ENCODE measurements at regions of chr2 and their contacts with region 1.

Region 1: GRCh38 chr2:159124441-159124911 is 156.0 kb downstream of the TANC1 start:
- DNase-seq: peak; percentile 89
- H3K4me3 ChIP-seq: no peak overlapping the region
- H3K27ac ChIP-seq: peak overlapping the region; percentile 70
- H3K4me1 ChIP-seq: peaks cover 33% of the 10 kb centered on the region
- H3K27me3 ChIP-seq: no peaks in the 10 kb centered on the region
- CTCF ChIP-seq: no peak

Region 2: DNA sequence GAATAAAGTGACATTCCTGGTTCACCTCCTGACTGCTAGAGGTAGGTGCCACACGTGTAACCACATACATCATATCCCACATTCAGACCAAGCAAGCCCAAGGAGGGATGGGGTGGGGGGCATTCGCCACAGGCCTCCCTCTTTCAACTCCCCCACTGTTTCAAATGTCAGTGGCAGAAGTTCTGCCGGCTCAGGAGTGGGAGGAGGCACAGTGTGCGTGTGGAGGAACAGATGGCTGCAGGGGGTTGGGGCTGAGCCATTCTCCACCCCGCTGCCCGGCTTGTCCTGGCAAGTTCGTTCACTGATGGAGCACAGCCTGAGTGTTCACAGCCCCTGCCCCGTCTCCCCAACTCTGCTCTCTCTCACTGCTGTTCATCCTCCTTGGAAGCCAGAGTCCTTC is 231.4 kb before region 1 on chr2:
- CTCF ChIA-PET with region 1: no interaction called
- dilution Hi-C with region 1: no loop called
- in situ Hi-C with region 1: loop called in 1 of 2 experiments (anchors 10 kb)
- intact Hi-C with region 1: no loop called
- DNase-seq: peak; percentile 90
- H3K4me3 ChIP-seq: no peak overlapping the region
- H3K27ac ChIP-seq: peak overlapping the region; percentile 96
- H3K4me1 ChIP-seq: peaks cover 55% of the 10 kb centered on the region
- H3K27me3 ChIP-seq: no peaks in the 10 kb centered on the region
- CTCF ChIP-seq: no peak

Region 3: DNA sequence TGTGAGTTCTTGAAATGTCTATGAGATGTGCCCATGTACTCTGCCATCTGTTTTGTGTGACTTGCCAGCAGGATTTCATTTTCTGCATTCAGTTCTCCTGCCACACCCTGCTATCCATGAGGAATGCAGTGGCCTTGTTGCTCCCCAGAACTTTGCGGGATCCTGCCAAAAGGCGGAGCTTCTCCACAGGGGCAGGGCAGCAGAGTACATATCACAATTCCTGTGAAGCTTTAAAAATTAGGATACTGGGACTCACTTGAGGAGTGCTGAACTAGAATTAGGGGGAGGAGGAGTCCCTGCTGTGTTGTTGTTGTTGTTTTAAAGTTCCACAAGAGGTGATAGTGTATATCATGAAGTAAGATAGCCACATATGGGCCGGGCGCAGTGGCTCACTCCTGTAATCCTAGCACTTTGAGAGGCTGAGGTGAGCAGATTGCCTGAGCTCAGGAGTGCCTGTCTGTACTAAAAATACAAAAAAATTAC is 79.6 kb before region 1 on chr2:
- CTCF ChIA-PET with region 1: no interaction called
- dilution Hi-C with region 1: no loop called
- in situ Hi-C with region 1: loop called in 1 of 2 experiments (anchors 5 kb)
- intact Hi-C with region 1: no loop called
- DNase-seq: no peak
- H3K4me3 ChIP-seq: no peak overlapping the region
- H3K27ac ChIP-seq: peak overlapping the region; percentile 40
- H3K4me1 ChIP-seq: peaks cover 56% of the 10 kb centered on the region
- H3K27me3 ChIP-seq: no peaks in the 10 kb centered on the region
- CTCF ChIP-seq: no peak

Region 4: DNA sequence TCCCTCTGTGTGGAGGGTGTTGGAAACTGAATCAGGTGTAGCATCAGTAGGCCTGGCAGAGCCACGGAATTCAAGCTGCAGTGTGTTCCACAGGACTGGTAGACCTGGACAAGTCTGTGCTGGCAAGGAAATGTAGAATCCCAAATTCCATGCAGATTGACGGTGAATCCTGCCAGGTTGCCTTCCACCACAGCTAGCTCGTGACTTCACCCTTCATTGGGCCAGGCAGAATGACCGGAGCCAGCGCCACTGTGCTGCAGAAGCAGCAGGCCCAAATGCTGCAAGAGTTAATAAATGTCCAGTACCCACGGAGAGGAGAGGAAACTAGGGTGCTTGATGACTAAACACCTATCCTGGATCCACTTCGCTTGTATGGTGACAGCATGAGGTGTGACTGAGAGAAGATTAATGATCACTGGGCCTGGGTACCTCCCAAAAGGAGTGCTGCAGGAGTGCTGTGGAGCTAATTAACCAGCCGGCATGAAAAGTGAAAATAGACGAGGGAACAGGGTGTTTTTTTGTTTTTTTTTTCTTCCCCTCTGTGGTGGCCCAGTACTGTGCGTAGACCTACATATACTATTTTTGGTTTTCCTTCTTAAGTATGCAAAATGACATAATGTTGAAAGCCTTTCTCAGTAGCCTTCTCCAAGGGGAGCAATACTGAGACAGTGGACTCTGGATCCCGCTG is 33.8 kb before region 1 on chr2:
- CTCF ChIA-PET with region 1: no interaction called
- dilution Hi-C with region 1: no loop called
- in situ Hi-C with region 1: no loop called
- intact Hi-C with region 1: no loop called
- DNase-seq: peak; percentile 73
- H3K4me3 ChIP-seq: no peak overlapping the region
- H3K27ac ChIP-seq: peak overlapping the region; percentile 61
- H3K4me1 ChIP-seq: peaks cover 48% of the 10 kb centered on the region
- H3K27me3 ChIP-seq: no peaks in the 10 kb centered on the region
- CTCF ChIP-seq: no peak

Region 5: DNA sequence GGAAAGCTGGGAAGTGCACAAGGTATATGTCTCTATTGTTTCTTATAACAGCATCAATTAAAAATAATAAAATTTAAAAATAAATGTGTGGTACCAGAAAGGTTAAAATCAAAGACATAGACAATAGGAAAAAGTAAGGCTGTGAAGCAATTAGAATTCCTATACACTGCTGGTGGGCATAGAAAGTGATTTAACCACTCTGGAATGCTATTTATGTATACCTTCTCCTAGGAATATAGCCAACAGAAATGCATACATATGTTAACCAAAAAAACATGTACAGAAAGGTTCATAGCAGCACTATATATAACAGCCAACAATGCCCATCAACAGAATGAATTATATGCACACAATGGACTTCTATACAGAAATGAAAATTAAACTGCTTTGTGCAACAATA is 119.1 kb after region 1 on chr2:
- CTCF ChIA-PET with region 1: no interaction called
- dilution Hi-C with region 1: no loop called
- in situ Hi-C with region 1: no loop called
- intact Hi-C with region 1: no loop called
- DNase-seq: no peak
- H3K4me3 ChIP-seq: no peak overlapping the region
- H3K27ac ChIP-seq: no peak overlapping the region
- H3K4me1 ChIP-seq: peaks cover 4% of the 10 kb centered on the region
- H3K27me3 ChIP-seq: no peaks in the 10 kb centered on the region
- CTCF ChIP-seq: no peak

Measured in mammary epithelial cell (primary cell).